Lower lobe of right lung (tissue), 2 donors: ENCODE measurements at regions of chr12 and their contacts with region 1.

Region 1: DNA sequence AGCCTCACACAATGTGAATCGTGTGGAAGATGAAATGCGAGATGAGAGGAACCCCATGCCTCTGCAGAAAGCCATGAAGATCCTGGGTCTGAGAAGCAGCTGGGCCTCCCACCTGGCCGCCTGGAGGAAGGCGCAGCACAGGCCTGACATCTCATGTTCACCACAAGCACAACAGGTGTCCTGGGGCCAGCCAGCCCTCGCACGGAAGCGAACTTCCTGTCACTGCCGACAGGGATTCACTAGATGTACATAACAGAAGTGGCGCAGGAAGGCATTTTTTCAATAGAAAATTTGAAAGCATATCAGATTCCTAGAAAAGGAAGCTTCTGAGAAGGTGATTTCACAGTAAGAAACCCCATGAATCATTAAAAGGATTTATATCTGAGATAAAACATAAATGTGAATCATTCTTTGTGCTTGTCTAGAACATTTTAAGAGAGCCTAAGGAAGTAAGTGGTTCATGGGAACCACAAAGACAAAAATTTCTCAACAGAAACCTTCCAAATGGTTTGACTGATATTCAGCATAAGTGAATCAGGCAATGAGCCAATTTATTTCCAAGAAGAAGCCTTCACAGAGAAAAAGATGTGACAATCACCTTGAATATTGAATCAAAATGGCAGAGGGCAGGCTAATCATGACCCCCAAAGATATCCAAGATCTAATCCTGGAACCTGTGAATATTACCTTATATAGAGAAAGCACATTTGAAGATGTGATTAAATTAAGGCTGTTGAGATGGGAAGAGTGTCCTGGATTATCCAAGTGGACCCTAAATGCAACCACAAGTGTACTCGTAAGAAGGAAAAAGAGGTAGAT is 311.9 kb downstream of the DUSP6 start:
- DNase-seq: peak; percentile 46
- ATAC-seq: peak; percentile 28 to 41
- H3K4me3 ChIP-seq: no peak overlapping the region
- H3K27ac ChIP-seq: no peak overlapping the region
- H3K4me1 ChIP-seq: no peaks in the 10 kb centered on the region
- H3K27me3 ChIP-seq: no peaks in the 10 kb centered on the region
- CTCF ChIP-seq: no peak

Region 2: GRCh38 chr12:89461649-89462612 is 421.6 kb after region 1 on chr12:
- intact Hi-C with region 1: loop called (anchors 10 kb)
- DNase-seq: no peak
- ATAC-seq: peak; percentile 90 to 94
- H3K4me3 ChIP-seq: peak overlapping the region; percentile 19
- H3K27ac ChIP-seq: peak overlapping the region; percentile 44
- H3K4me1 ChIP-seq: peaks cover 17% of the 10 kb centered on the region
- H3K27me3 ChIP-seq: no peaks in the 10 kb centered on the region
- CTCF ChIP-seq: peak; percentile 66